CD4-positive, alpha-beta T cell (primary cell): ENCODE measurements at regions of chr13 and their contacts with region 1.

Region 1: GRCh38 chr13:28792992-28793391 is 27.1 kb upstream of the MTUS2 start:
- DNase-seq: no peak
- ATAC-seq: no peak
- H3K4me3 ChIP-seq: no peak overlapping the region
- H3K4me3 Mint-ChIP-seq: no peak overlapping the region
- H3K27ac ChIP-seq: no peak overlapping the region
- H3K27ac Mint-ChIP-seq: no peak overlapping the region
- H3K4me1 ChIP-seq: peaks cover 4% of the 10 kb centered on the region
- H3K4me1 Mint-ChIP-seq: no peaks in the 10 kb centered on the region
- H3K27me3 ChIP-seq: peaks cover 5 to 10% of the 10 kb centered on the region in 2 experiments
- H3K27me3 Mint-ChIP-seq: peaks cover 52% of the 10 kb centered on the region
- CTCF ChIP-seq: no peak

Region 2: GRCh38 chr13:28067491-28067890 is 725.5 kb before region 1 on chr13:
- CTCF ChIA-PET with region 1: no interaction called
- POLR2A ChIA-PET with region 1: no interaction called
- intact Hi-C with region 1: loop called in 1 of 2 experiments (anchors 10 kb)
- DNase-seq: no peak
- ATAC-seq: no peak
- H3K4me3 ChIP-seq: no peak overlapping the region
- H3K4me3 Mint-ChIP-seq: no peak overlapping the region
- H3K27ac ChIP-seq: no peak overlapping the region
- H3K27ac Mint-ChIP-seq: no peak overlapping the region
- H3K4me1 ChIP-seq: no peaks in the 10 kb centered on the region
- H3K4me1 Mint-ChIP-seq: peaks cover 10% of the 10 kb centered on the region
- H3K27me3 ChIP-seq: no peaks in the 10 kb centered on the region
- H3K27me3 Mint-ChIP-seq: no peaks in the 10 kb centered on the region
- CTCF ChIP-seq: no peak

Region 3: GRCh38 chr13:28324181-28324789 is 468.7 kb before region 1 on chr13:
- CTCF ChIA-PET with region 1: interaction called, 5 read pairs
- POLR2A ChIA-PET with region 1: no interaction called
- intact Hi-C with region 1: loop called in 1 of 2 experiments (anchors 2 kb)
- DNase-seq: peak; percentile 14 to 71 (median 35)
- ATAC-seq: peak; percentile 61
- H3K4me3 ChIP-seq: no peak overlapping the region
- H3K4me3 Mint-ChIP-seq: no peak overlapping the region
- H3K27ac ChIP-seq: no peak overlapping the region
- H3K27ac Mint-ChIP-seq: no peak overlapping the region
- H3K4me1 ChIP-seq: no peaks in the 10 kb centered on the region
- H3K4me1 Mint-ChIP-seq: no peaks in the 10 kb centered on the region
- H3K27me3 ChIP-seq: no peaks in the 10 kb centered on the region
- H3K27me3 Mint-ChIP-seq: no peaks in the 10 kb centered on the region
- CTCF ChIP-seq: peak; percentile 64

Region 4: GRCh38 chr13:28679628-28680027 is 113.4 kb before region 1 on chr13:
- CTCF ChIA-PET with region 1: no interaction called
- POLR2A ChIA-PET with region 1: no interaction called
- intact Hi-C with region 1: loop called in 1 of 2 experiments (anchors 5 kb)
- DNase-seq: no peak
- ATAC-seq: no peak
- H3K4me3 ChIP-seq: no peak overlapping the region
- H3K4me3 Mint-ChIP-seq: no peak overlapping the region
- H3K27ac ChIP-seq: no peak overlapping the region
- H3K27ac Mint-ChIP-seq: no peak overlapping the region
- H3K4me1 ChIP-seq: no peaks in the 10 kb centered on the region
- H3K4me1 Mint-ChIP-seq: no peaks in the 10 kb centered on the region
- H3K27me3 ChIP-seq: no peaks in the 10 kb centered on the region
- H3K27me3 Mint-ChIP-seq: no peaks in the 10 kb centered on the region
- CTCF ChIP-seq: no peak